ENCODE measurements at regions of chr16 and their contacts with region 1.

Region 1: GRCh38 chr16:20383106-20384029 is 21.2 kb downstream of the PDILT start:
- DNase-seq: no peak
- H3K4me3 ChIP-seq: no peak overlapping the region
- H3K27ac ChIP-seq: no peak overlapping the region
- H3K4me1 ChIP-seq: peaks cover 0 to 12% (median 6%) of the 10 kb centered on the region in 4 donors
- H3K27me3 ChIP-seq: peaks cover 0 to 31% (median 0%) of the 10 kb centered on the region in 4 donors
- CTCF ChIP-seq: peak; percentile 66 to 92 (median 74)
- EP300 ChIP-seq: no peak
- POLR2A ChIP-seq: no peak

Region 2: GRCh38 chr16:19907161-19907992 is 476.0 kb before region 1 on chr16:
- intact Hi-C with region 1: loop called (anchors 2 kb)
- DNase-seq: no peak
- H3K4me3 ChIP-seq: peak overlapping the region in 2 of 4 donors; percentile 12 to 35
- H3K27ac ChIP-seq: no peak overlapping the region
- H3K4me1 ChIP-seq: peaks cover 0 to 10% (median 8%) of the 10 kb centered on the region in 4 donors
- H3K27me3 ChIP-seq: peaks cover 0 to 24% (median 6%) of the 10 kb centered on the region in 4 donors
- CTCF ChIP-seq: peak; percentile 82 to 96 (median 88)
- EP300 ChIP-seq: no peak
- POLR2A ChIP-seq: no peak

Region 3: GRCh38 chr16:20191566-20191965 is 191.8 kb before region 1 on chr16:
- intact Hi-C with region 1: no loop called
- DNase-seq: no peak
- H3K4me3 ChIP-seq: no peak overlapping the region
- H3K27ac ChIP-seq: no peak overlapping the region
- H3K4me1 ChIP-seq: no peaks in the 10 kb centered on the region
- H3K27me3 ChIP-seq: peaks cover 0 to 7% (median 0%) of the 10 kb centered on the region in 4 donors
- CTCF ChIP-seq: no peak
- EP300 ChIP-seq: no peak
- POLR2A ChIP-seq: no peak

Region 4: GRCh38 chr16:20327444-20328041 is 55.8 kb before region 1 on chr16 and contains the start of gene GP2:
- intact Hi-C with region 1: loop called (anchors 10 kb)
- DNase-seq: no peak
- H3K4me3 ChIP-seq: no peak within 1 kb of the TSS
- H3K27ac ChIP-seq: no peak within 1 kb of the TSS
- H3K4me1 ChIP-seq: no peaks in the 10 kb centered on the region
- H3K27me3 ChIP-seq: peaks cover 0 to 3% (median 0%) of the 10 kb centered on the region in 4 donors
- CTCF ChIP-seq: no peak
- EP300 ChIP-seq: no peak
- POLR2A ChIP-seq: no peak
- total RNA-seq, gene GP2: not detected

Region 5: GRCh38 chr16:20415541-20415940 is 32.2 kb after region 1 on chr16:
- intact Hi-C with region 1: no loop called
- DNase-seq: no peak
- H3K4me3 ChIP-seq: no peak overlapping the region
- H3K27ac ChIP-seq: no peak overlapping the region
- H3K4me1 ChIP-seq: no peaks in the 10 kb centered on the region
- H3K27me3 ChIP-seq: no peaks in the 10 kb centered on the region
- CTCF ChIP-seq: no peak
- EP300 ChIP-seq: no peak
- POLR2A ChIP-seq: no peak

Measured in esophagus muscularis mucosa (tissue), 4 donors.